MCF 10A (cell line): ENCODE measurements at regions of chr12 and their contacts with region 1.

Region 1: DNA sequence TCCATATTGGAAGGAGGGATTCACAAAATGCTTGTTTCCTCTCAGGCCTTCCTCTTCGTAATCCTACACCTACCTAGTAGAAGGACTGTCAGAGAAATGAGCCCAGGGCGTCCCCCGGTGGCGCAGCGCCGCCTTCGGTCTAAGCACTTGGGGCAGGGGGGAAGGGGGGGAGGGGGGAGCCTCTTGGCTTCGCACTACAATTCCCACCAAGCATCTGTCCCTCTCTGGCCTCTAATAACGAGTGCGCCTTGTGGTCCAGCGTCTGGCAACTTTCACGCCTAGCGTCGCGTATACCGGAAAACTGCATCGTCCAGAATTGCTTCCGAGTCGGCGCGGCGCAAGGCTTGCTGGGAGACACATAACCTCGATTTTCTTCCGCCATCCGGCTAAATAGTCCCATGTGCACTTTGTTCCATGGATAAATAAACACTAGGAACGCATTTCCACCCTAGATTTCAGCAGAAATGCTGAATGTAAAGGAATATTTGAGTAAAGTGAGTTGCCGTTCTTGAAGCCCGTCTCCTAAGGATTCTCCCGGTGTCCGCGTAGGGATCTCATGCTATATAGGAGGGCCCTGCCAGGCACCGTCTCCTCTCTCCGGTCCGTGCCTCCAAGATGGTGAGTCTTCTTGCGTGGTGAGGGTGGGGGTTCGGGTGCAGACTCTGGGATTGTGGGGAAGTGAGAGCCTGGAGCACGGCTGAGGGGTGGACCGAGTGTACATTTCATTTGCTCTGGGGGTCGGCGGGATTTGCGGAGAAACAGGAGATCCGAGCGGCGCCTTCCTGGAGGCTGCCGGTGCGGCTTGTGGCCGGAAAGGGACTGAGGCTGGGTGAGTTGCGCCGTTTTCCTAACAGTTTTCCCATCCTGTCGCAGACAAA is at the start of gene RPS26:
- DNase-seq: peak; percentile 99
- H3K4me3 Mint-ChIP-seq: peak within 1 kb of the TSS; percentile 81
- H3K27ac Mint-ChIP-seq: peak within 1 kb of the TSS; percentile 91
- H3K4me1 Mint-ChIP-seq: peaks cover 7% of the 10 kb centered on the region
- H3K27me3 Mint-ChIP-seq: no peaks in the 10 kb centered on the region
- CTCF ChIP-seq: peak; percentile 33
- total RNA-seq, gene RPS26: 45.1 and 67.3 TPM in 2 replicates

Region 2: GRCh38 chr12:55955800-55956508 is 85.8 kb before region 1 on chr12:
- CTCF ChIA-PET with region 1: interaction called, 3 read pairs
- POLR2A ChIA-PET with region 1: interaction called, 6 read pairs
- intact Hi-C with region 1: loop called (anchors 1 kb)
- DNase-seq: peak; percentile 88
- H3K4me3 Mint-ChIP-seq: no peak overlapping the region
- H3K27ac Mint-ChIP-seq: peak overlapping the region; percentile 32
- H3K4me1 Mint-ChIP-seq: peaks cover 28% of the 10 kb centered on the region
- H3K27me3 Mint-ChIP-seq: no peaks in the 10 kb centered on the region
- CTCF ChIP-seq: peak; percentile 43

Region 3: DNA sequence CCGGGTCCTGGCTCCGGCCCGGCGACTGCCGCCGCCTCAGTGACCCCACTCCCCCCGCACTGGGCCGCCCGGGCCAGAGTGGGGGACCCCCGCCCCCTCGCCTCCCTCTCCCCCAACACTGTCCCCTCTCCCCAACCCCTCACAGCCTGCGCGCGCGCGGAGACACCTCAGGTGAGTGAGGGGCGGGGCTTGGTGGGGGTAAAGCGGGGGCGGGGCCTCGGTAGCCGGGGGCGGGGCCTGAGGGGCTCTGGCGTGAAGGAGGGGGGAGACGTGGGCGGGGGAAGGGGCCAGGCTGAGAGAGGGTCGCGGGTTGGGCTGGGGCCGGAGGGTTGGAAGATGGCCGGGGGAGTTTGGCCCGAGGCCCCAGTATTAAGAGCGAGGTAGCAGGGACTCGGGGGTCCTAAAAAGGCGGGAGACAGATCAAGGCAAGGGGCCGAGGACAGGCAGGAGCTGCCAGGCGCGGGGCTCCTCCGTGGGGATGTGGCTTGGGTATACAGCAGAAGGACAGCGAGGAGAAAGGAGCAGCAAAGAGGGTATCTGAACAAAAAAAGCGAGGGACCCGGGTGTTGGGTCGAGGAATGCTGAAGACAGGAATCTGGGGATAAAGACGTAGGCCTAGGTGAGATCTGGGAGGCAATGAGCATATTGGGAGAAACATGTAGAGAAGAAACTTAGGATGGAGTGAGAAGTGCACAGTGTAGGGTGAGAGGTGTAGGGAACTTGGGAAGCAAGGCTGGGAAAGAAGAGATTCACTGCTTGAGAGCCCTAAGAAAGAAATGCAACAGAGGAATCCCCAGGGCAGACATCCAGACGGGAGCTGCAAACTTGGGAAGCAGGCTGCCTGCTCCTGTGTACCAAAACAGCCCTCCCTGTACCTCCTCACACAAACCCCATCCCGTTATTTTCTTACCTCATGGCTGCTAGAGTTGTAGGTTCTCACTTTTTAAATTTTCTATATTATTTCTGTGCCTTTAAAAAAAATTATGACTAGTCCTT is 33.9 kb before region 1 on chr12:
- CTCF ChIA-PET with region 1: interaction called, 6 read pairs
- POLR2A ChIA-PET with region 1: interaction called, 20 read pairs
- intact Hi-C with region 1: no loop called
- DNase-seq: peak; percentile 43
- H3K4me3 Mint-ChIP-seq: peak overlapping the region; percentile 69
- H3K27ac Mint-ChIP-seq: peak overlapping the region; percentile 60
- H3K4me1 Mint-ChIP-seq: no peaks in the 10 kb centered on the region
- H3K27me3 Mint-ChIP-seq: no peaks in the 10 kb centered on the region
- CTCF ChIP-seq: no peak

Region 4: DNA sequence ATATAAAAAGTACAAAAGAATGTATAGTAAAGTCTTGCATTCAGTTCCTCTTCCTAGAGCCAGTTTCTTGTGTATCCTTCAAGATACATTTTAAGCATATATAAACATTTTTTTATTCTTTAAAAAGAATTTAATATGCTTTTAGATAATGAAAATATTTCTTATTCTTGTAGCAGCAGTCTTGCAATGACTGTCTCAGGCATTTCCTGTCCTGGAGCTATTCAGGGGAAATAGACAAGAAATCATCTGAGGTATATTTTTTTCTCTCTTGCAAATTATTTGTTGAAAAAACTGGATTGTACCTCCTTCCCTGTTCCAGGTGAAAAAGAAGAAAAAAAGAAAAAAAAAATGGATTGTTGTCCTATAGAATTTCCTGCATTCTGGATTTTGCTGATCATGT is 21.2 kb after region 1 on chr12:
- CTCF ChIA-PET with region 1: interaction called, 12 read pairs
- POLR2A ChIA-PET with region 1: interaction called, 3 read pairs
- intact Hi-C with region 1: no loop called
- DNase-seq: no peak
- H3K4me3 Mint-ChIP-seq: no peak overlapping the region
- H3K27ac Mint-ChIP-seq: no peak overlapping the region
- H3K4me1 Mint-ChIP-seq: peaks cover 10% of the 10 kb centered on the region
- H3K27me3 Mint-ChIP-seq: no peaks in the 10 kb centered on the region
- CTCF ChIP-seq: no peak

Region 5: GRCh38 chr12:56104109-56104814 is 62.5 kb after region 1 on chr12 and contains the start of gene PA2G4:
- CTCF ChIA-PET with region 1: interaction called, 24 read pairs
- POLR2A ChIA-PET with region 1: interaction called, 65 read pairs
- intact Hi-C with region 1: no loop called
- DNase-seq: peak; percentile 99
- H3K4me3 Mint-ChIP-seq: peak within 1 kb of the TSS; percentile 97
- H3K27ac Mint-ChIP-seq: peak within 1 kb of the TSS; percentile 95
- H3K4me1 Mint-ChIP-seq: peaks cover 9% of the 10 kb centered on the region
- H3K27me3 Mint-ChIP-seq: no peaks in the 10 kb centered on the region
- CTCF ChIP-seq: no peak
- total RNA-seq, gene PA2G4: 158 and 205 TPM in 2 replicates